Left colon (tissue), 2 donors: ENCODE measurements at regions of chr12 and their contacts with region 1.

Region 1: GRCh38 chr12:12881151-12881894 is 10.0 kb upstream of the GPRC5A start:
- DNase-seq: peak in 1 of 2 donors; percentile 70
- ATAC-seq: peak; percentile 60

Region 2: DNA sequence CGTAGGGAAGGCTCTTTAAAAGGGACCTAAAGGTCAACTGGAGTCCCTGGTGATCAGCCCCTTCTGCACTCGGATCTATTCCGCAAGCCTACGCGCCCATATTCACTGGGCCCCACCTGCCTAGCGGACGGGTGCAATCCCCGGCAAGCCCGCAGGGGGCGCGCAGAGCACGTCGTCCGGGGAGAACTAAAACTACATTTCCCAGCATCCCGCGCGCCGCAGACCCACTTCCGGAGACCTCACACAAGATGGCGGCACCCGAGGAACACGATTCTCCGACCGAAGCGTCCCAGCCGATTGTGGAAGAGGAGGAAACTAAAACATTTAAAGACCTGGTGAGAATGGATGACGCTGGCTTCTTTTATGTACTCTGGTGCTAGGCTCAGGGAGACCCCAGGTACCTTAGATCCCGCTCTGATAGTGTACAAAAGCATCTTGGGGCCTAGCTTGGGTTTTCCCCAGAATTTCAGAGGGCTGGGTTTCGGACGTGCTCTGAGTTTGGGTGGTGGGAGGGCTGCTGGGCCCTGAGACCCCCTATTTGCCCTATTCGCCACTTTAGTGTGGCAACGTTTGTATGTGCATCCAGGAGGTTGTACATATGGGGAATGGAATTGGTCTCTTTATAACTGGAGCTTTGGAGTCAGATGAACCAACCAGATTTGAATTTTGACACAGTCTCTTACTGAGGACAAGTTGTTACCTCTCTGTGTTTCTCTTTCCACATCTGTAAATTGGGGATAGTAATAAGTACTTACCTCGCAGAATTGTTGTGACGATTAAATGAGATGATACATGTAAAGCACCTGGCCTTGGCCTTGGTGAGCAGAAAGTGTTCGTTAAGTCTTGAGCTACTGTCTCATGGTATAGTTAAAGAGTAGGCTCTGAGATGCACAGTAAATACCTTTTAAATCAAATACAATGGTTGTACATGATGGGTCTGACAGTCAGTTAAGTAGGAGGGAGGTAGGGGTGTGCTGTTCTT is 67.9 kb before region 1 on chr12 and contains the start of gene DDX47:
- intact Hi-C with region 1: no loop called
- DNase-seq: peak; percentile 94 to 99
- ATAC-seq: peak; percentile 96
- total RNA-seq, gene DDX47: 30.5 to 31.0 TPM

Region 3: GRCh38 chr12:12837025-12837872 is 44.1 kb before region 1 on chr12:
- intact Hi-C with region 1: loop called in 1 of 2 experiments (anchors 10 kb)
- DNase-seq: peak; percentile 47 to 69
- ATAC-seq: peak; percentile 59

Region 4: GRCh38 chr12:13044002-13044905 is 162.9 kb after region 1 on chr12 and contains the start of gene FAM234B:
- intact Hi-C with region 1: no loop called
- DNase-seq: peak; percentile 53 to 78
- ATAC-seq: peak; percentile 51
- total RNA-seq, gene FAM234B: 1.3 to 1.7 TPM